Colonic mucosa (tissue), 4 donors: ENCODE measurements at regions of chr4 and their contacts with region 1.

Region 1: GRCh38 chr4:114077610-114078009 is 98.2 kb upstream of the ARSJ start:
- DNase-seq: no peak
- H3K4me3 ChIP-seq: no peak overlapping the region
- H3K27ac ChIP-seq: no peak overlapping the region
- H3K4me1 ChIP-seq: no peaks in the 10 kb centered on the region
- H3K27me3 ChIP-seq: no peaks in the 10 kb centered on the region
- CTCF ChIP-seq: no peak

Region 2: DNA sequence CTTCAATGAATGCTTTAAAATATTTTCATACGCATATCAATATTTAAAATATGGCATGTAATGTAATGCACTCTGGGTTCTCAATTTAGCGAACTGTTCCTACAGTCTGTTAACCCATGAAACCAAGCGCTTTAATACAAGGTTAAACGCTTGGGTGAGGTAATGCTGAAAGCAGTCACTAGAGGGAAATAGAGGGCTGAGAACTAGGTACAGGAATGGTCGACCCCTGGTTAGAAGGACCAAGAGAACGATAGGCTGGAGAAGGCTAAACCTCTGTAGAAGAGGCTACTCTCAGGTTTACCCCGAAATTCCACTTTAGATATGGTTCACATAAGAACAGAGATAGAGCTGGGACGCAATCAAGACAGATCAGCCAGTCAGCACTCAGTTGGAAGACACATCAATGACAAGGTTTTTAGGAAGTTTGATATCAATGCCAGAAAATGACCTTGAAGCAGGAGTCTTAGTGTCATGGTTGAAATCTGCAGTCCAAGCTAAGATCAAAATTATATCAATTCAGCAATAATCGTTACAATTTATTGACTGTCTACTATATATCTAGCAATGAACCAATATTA is 125.1 kb before region 1 on chr4:
- intact Hi-C with region 1: loop called (anchors 5 kb)
- DNase-seq: peak; percentile 55
- H3K4me3 ChIP-seq: no peak overlapping the region
- H3K27ac ChIP-seq: no peak overlapping the region
- H3K4me1 ChIP-seq: peaks cover 11% of the 10 kb centered on the region
- H3K27me3 ChIP-seq: no peaks in the 10 kb centered on the region
- CTCF ChIP-seq: peak; percentile 70